Mammary epithelial cell (primary cell): ENCODE measurements at regions of chr12 and their contacts with region 1.

Region 1: DNA sequence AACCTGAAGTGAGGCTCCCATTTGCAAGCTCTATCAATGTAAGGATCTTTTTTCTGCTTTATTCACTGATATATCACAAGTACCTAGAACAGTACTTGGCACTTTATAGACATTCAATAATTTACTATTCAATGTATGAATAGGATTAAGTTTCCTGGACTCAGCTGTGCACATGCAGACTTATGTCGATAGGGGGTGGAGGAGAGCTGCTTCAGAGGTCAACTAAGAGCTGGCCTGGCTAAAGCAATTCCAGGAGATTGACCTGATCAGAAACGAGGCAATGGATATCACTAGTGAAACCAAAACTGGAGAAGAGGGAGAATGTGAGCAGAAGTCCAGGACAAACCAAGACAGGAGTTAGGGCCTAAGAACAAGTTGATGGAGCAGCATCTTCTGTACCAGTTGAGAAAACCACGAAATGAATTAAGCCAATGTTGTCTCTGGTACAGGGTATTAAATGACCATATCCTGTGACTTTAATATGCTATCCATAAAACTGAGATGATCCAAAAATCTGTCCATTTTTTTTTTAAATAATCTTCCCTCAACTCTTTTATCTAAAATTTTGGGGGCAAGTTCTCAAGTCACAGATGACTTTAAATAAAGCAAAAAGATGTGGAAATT is 169.2 kb downstream of the PIK3C2G start:
- DNase-seq: peak; percentile 38
- H3K4me3 ChIP-seq: no peak overlapping the region
- H3K27ac ChIP-seq: no peak overlapping the region
- H3K4me1 ChIP-seq: no peaks in the 10 kb centered on the region
- H3K27me3 ChIP-seq: no peaks in the 10 kb centered on the region
- CTCF ChIP-seq: peak; percentile 95

Region 2: GRCh38 chr12:18250313-18250916 is 180.1 kb before region 1 on chr12:
- CTCF ChIA-PET with region 1: no interaction called
- dilution Hi-C with region 1: no loop called
- in situ Hi-C with region 1: no loop called
- intact Hi-C with region 1: loop called (anchors 10 kb)
- DNase-seq: peak; percentile 58
- H3K4me3 ChIP-seq: no peak overlapping the region
- H3K27ac ChIP-seq: no peak overlapping the region
- H3K4me1 ChIP-seq: peaks cover 4% of the 10 kb centered on the region
- H3K27me3 ChIP-seq: no peaks in the 10 kb centered on the region
- CTCF ChIP-seq: peak; percentile 70 to 72

Region 3: DNA sequence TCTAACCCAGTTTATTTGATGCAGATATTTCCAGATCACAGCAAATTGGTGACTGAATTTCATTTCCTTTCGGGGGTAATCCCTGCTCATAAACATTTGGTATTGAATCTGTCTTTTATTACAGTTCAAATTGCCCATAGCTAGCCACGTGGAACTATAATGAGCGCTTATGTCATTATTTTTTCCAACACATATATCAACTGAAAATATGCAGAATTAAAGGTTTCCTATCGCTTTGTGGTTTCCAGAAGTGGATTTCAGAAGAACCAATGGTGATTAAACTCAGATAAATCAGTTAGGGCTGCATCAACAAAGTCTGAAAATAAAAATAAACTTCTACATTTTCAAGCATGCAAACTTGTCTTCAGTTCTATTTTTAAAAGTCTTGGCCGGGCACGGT is 57.4 kb before region 1 on chr12:
- CTCF ChIA-PET with region 1: no interaction called
- dilution Hi-C with region 1: no loop called
- in situ Hi-C with region 1: no loop called
- intact Hi-C with region 1: no loop called
- DNase-seq: no peak
- H3K4me3 ChIP-seq: no peak overlapping the region
- H3K27ac ChIP-seq: no peak overlapping the region
- H3K4me1 ChIP-seq: no peaks in the 10 kb centered on the region
- H3K27me3 ChIP-seq: no peaks in the 10 kb centered on the region
- CTCF ChIP-seq: no peak

Region 4: GRCh38 chr12:18690653-18691052 is 260.1 kb after region 1 on chr12:
- CTCF ChIA-PET with region 1: no interaction called
- dilution Hi-C with region 1: no loop called
- in situ Hi-C with region 1: no loop called
- intact Hi-C with region 1: loop called (anchors 10 kb)
- DNase-seq: peak; percentile 99
- H3K4me3 ChIP-seq: no peak overlapping the region
- H3K27ac ChIP-seq: peak overlapping the region; percentile 96
- H3K4me1 ChIP-seq: peaks cover 21% of the 10 kb centered on the region
- H3K27me3 ChIP-seq: no peaks in the 10 kb centered on the region
- CTCF ChIP-seq: no peak

Region 5: DNA sequence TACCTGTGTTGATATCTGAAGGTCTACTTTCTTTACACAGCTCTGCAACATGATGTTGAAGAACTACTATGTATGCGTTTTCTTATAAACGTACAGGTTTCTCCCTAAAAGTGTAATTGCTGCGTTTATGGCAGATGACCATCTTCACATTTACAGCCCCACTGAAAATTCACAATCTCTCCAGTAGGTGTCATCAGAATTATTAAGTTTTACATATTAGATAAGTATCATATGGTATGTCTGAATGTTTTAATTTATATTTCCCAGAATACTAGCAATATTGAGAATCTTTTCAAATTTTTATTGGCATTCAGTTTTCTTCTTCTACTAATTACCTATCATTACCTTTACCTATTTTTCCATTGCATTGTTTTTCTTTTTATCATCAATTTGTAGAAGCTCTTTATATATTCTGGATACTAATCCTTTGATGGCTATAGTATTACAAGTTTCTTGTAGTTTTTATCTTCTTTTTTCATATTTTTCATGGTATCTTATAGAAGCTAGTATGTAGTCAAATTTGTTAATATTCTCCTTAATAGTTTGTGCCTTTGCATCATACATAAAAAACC is 430.8 kb after region 1 on chr12:
- CTCF ChIA-PET with region 1: interaction called, 10 read pairs
- dilution Hi-C with region 1: no loop called
- in situ Hi-C with region 1: no loop called
- intact Hi-C with region 1: loop called (anchors 10 kb)
- DNase-seq: peak; percentile 26
- H3K4me3 ChIP-seq: no peak overlapping the region
- H3K27ac ChIP-seq: no peak overlapping the region
- H3K4me1 ChIP-seq: peaks cover 15% of the 10 kb centered on the region
- H3K27me3 ChIP-seq: no peaks in the 10 kb centered on the region
- CTCF ChIP-seq: peak; percentile 56 to 76

Region 6: DNA sequence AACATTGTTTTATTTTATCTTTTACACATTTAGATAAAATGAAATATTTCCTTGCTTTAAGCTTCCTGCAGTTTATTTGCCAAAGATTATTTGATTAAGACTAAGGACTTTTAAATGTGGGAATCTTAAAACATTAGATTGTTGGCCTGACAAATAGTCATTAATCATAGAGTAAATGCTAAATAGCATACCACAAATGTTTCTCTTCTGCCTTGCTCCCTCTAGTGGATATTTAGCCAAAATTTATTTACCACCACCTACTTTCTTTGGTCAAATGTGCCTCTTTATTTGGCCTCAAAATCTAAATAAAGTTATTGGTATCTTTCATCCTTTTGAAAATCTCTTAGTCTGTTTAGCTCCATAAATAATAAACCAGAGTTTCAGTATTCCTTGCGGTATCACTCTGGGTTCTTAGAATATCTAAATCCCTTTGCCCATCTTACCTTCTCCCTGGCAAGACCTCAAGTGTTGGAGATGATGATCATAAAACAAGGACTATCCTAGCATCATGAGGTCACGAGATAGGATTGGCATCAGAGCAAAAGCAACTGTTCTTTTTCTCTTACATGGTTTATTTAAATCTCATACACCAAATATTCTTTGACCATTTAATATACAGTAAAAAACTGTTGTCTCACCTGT is 858.2 kb after region 1 on chr12:
- CTCF ChIA-PET with region 1: no interaction called
- dilution Hi-C with region 1: no loop called
- in situ Hi-C with region 1: no loop called
- intact Hi-C with region 1: loop called (anchors 5 kb)
- DNase-seq: peak; percentile 23
- H3K4me3 ChIP-seq: no peak overlapping the region
- H3K27ac ChIP-seq: no peak overlapping the region
- H3K4me1 ChIP-seq: no peaks in the 10 kb centered on the region
- H3K27me3 ChIP-seq: no peaks in the 10 kb centered on the region
- CTCF ChIP-seq: peak; percentile 56 to 63